ENCODE measurements at regions of chr4 and their contacts with region 1.

Region 1: GRCh38 chr4:70559211-70559830 is 32.7 kb upstream of the AMBN start:
- DNase-seq: no peak
- ATAC-seq: peak; percentile 84
- H3K4me3 ChIP-seq: no peak overlapping the region
- H3K27ac ChIP-seq: no peak overlapping the region
- H3K4me1 ChIP-seq: no peaks in the 10 kb centered on the region
- H3K27me3 ChIP-seq: no peaks in the 10 kb centered on the region
- CTCF ChIP-seq: peak; percentile 62 to 67 (median 67)
- EP300 ChIP-seq: no peak
- POLR2A ChIP-seq: no peak
- RAD21 ChIP-seq: peak; percentile 82

Region 2: DNA sequence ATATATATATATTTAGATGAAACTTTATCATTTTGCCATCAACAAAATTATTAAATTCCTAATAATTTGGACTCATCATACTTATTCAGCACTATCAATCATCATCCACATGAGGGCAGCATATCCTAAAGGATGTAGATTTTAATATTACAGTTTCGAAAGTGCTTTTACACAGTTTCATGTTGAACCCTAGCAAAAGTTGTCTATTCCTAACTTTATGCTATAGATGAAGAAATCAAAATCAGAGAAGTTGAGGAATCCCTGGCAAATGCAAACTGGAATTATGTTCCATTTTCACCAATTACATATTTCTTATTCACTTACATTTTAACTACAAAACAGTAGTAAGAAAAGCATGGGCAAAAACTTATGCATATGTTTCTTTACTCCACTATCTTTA is 869.7 kb before region 1 on chr4:
- CTCF ChIA-PET with region 1: no interaction called
- POLR2A ChIA-PET with region 1: no interaction called
- RAD21 ChIA-PET with region 1: no interaction called
- SMC1A ChIA-PET with region 1: no interaction called
- in situ Hi-C with region 1: no loop called
- intact Hi-C with region 1: loop called (anchors 5 kb)
- DNase-seq: no peak
- ATAC-seq: peak; percentile 44; the same call in 1 of the 3 replicates
- H3K4me3 ChIP-seq: no peak overlapping the region
- H3K27ac ChIP-seq: no peak overlapping the region
- H3K4me1 ChIP-seq: no peaks in the 10 kb centered on the region
- H3K27me3 ChIP-seq: no peaks in the 10 kb centered on the region
- CTCF ChIP-seq: peak; percentile 21 to 61 (median 39); a peak in 3 of 6 replicates
- EP300 ChIP-seq: no peak
- POLR2A ChIP-seq: no peak
- RAD21 ChIP-seq: peak; percentile 85

Region 3: GRCh38 chr4:70315928-70316327 is 243.4 kb before region 1 on chr4:
- CTCF ChIA-PET with region 1: interaction called, 8 read pairs
- POLR2A ChIA-PET with region 1: no interaction called
- RAD21 ChIA-PET with region 1: no interaction called
- SMC1A ChIA-PET with region 1: interaction called, 3 read pairs
- in situ Hi-C with region 1: no loop called
- intact Hi-C with region 1: loop called (anchors 5 kb)
- DNase-seq: no peak
- ATAC-seq: peak; percentile 84
- H3K4me3 ChIP-seq: no peak overlapping the region
- H3K27ac ChIP-seq: no peak overlapping the region
- H3K4me1 ChIP-seq: no peaks in the 10 kb centered on the region
- H3K27me3 ChIP-seq: no peaks in the 10 kb centered on the region
- CTCF ChIP-seq: peak; percentile 26 to 49 (median 28); a peak in 3 of 6 replicates
- EP300 ChIP-seq: no peak
- POLR2A ChIP-seq: no peak
- RAD21 ChIP-seq: peak; percentile 42

Region 4: DNA sequence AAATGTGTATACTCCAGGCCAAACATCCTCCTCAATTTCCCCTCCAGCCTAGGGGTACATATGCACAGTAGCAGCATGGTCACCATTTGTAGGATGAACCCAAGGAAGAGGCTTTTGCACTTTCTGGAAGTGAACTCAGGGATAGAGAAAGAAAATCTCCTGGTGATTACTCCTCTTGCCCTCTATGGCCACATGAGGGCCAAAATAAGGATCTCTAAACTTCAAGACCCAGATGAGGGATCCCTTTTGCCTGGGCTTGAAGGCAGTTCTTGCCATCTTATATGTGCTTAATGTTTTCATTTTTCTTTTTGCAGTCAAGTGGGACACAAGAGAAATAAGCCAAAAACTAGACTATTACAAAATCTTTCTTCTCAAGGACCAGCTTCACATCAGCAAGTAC is 116.8 kb before region 1 on chr4:
- CTCF ChIA-PET with region 1: no interaction called
- POLR2A ChIA-PET with region 1: no interaction called
- RAD21 ChIA-PET with region 1: no interaction called
- SMC1A ChIA-PET with region 1: no interaction called
- in situ Hi-C with region 1: no loop called
- intact Hi-C with region 1: no loop called
- DNase-seq: no peak
- ATAC-seq: no peak
- H3K4me3 ChIP-seq: no peak overlapping the region
- H3K27ac ChIP-seq: no peak overlapping the region
- H3K4me1 ChIP-seq: no peaks in the 10 kb centered on the region
- H3K27me3 ChIP-seq: no peaks in the 10 kb centered on the region
- CTCF ChIP-seq: no peak
- EP300 ChIP-seq: no peak
- POLR2A ChIP-seq: no peak
- RAD21 ChIP-seq: no peak